Naive thymus-derived CD4-positive, alpha-beta T cell (primary cell): ENCODE measurements at regions of chr5 and their contacts with region 1.

Region 1: GRCh38 chr5:112691758-112692157 is 45.9 kb upstream of the APC start:
- DNase-seq: peak in 3 of 9 donors; percentile 16 to 50 (median 19)
- ATAC-seq: no peak
- H3K4me3 ChIP-seq: no peak overlapping the region
- H3K4me3 Mint-ChIP-seq: no peak overlapping the region
- H3K27ac ChIP-seq: no peak overlapping the region
- H3K27ac Mint-ChIP-seq: no peak overlapping the region
- H3K4me1 ChIP-seq: no peaks in the 10 kb centered on the region
- H3K4me1 Mint-ChIP-seq: no peaks in the 10 kb centered on the region
- H3K27me3 ChIP-seq: no peaks in the 10 kb centered on the region
- H3K27me3 Mint-ChIP-seq: peaks cover 36 to 68% (median 59%) of the 10 kb centered on the region in 5 donors

Region 2: GRCh38 chr5:112757468-112758208 is 65.9 kb after region 1 on chr5:
- CTCF ChIA-PET with region 1: interaction called, 14 read pairs
- POLR2A ChIA-PET with region 1: no interaction called
- intact Hi-C with region 1: loop called (anchors 1 kb)
- DNase-seq: peak in 7 of 9 donors; percentile 14 to 64 (median 52)
- ATAC-seq: peak; percentile 88
- H3K4me3 ChIP-seq: no peak overlapping the region
- H3K4me3 Mint-ChIP-seq: no peak overlapping the region
- H3K27ac ChIP-seq: no peak overlapping the region
- H3K27ac Mint-ChIP-seq: peak overlapping the region in 5 of 9 donors; percentile 36 to 82 (median 58)
- H3K4me1 ChIP-seq: no peaks in the 10 kb centered on the region
- H3K4me1 Mint-ChIP-seq: peaks cover 3 to 25% (median 18%) of the 10 kb centered on the region in 7 donors
- H3K27me3 ChIP-seq: no peaks in the 10 kb centered on the region
- H3K27me3 Mint-ChIP-seq: no peaks in the 10 kb centered on the region

Region 3: DNA sequence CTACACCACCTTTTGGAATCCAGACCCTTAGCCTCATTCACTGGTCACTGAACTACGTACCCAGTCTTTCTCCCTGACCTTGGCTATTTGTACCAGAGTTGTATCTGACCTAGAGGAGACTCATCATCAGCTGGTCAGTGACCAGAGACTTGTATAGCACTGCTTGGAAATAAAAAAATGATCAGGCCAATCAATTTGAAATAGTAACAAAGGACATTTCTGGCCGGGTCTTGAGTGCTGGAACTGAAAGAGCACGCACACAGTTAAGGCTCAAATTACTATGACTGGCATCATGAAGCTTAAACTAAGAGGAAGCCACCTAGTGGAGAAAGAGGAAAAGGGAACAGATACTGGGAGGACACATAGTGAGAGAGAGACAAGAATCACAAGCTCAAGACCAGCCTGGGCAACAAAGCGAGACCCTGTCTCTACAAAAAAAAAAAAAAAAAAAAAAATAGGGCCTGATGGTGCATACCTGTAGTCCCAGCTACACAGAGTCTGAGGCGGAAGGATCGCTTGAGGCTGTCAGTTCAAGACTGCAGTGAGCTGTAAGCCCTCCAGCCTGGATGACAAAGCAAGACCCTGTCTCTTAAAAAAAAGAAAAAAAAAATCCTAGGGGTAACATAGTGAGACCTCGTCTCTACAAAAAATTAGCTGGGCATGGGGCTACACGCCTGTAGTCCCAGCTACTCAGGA is 156.5 kb after region 1 on chr5:
- CTCF ChIA-PET with region 1: interaction called, 3 read pairs
- POLR2A ChIA-PET with region 1: no interaction called
- intact Hi-C with region 1: loop called in 1 of 2 experiments (anchors 2 kb)
- DNase-seq: peak in 7 of 9 donors; percentile 8 to 51 (median 40)
- ATAC-seq: peak; percentile 97
- H3K4me3 ChIP-seq: no peak overlapping the region
- H3K4me3 Mint-ChIP-seq: peak overlapping the region in 2 of 10 donors; percentile 16 to 41
- H3K27ac ChIP-seq: no peak overlapping the region
- H3K27ac Mint-ChIP-seq: peak overlapping the region in 3 of 9 donors; percentile 53 to 58 (median 53)
- H3K4me1 ChIP-seq: no peaks in the 10 kb centered on the region
- H3K4me1 Mint-ChIP-seq: peaks cover 4 to 8% (median 6%) of the 10 kb centered on the region in 7 donors
- H3K27me3 ChIP-seq: no peaks in the 10 kb centered on the region
- H3K27me3 Mint-ChIP-seq: peaks cover 0 to 20% (median 5%) of the 10 kb centered on the region in 5 donors

Region 4: GRCh38 chr5:112960315-112960714 is 268.6 kb after region 1 on chr5:
- CTCF ChIA-PET with region 1: no interaction called
- POLR2A ChIA-PET with region 1: no interaction called
- intact Hi-C with region 1: loop called (anchors 1 to 5 kb)
- DNase-seq: no peak
- ATAC-seq: no peak
- H3K4me3 ChIP-seq: no peak overlapping the region
- H3K4me3 Mint-ChIP-seq: no peak overlapping the region
- H3K27ac ChIP-seq: no peak overlapping the region
- H3K27ac Mint-ChIP-seq: peak overlapping the region in 1 of 9 donors; percentile 13
- H3K4me1 ChIP-seq: no peaks in the 10 kb centered on the region
- H3K4me1 Mint-ChIP-seq: peaks cover 6 to 44% (median 17%) of the 10 kb centered on the region in 7 donors
- H3K27me3 ChIP-seq: no peaks in the 10 kb centered on the region
- H3K27me3 Mint-ChIP-seq: peaks cover 0 to 7% (median 0%) of the 10 kb centered on the region in 5 donors